ENCODE measurements at regions of chr17 and their contacts with region 1.

Region 1: DNA sequence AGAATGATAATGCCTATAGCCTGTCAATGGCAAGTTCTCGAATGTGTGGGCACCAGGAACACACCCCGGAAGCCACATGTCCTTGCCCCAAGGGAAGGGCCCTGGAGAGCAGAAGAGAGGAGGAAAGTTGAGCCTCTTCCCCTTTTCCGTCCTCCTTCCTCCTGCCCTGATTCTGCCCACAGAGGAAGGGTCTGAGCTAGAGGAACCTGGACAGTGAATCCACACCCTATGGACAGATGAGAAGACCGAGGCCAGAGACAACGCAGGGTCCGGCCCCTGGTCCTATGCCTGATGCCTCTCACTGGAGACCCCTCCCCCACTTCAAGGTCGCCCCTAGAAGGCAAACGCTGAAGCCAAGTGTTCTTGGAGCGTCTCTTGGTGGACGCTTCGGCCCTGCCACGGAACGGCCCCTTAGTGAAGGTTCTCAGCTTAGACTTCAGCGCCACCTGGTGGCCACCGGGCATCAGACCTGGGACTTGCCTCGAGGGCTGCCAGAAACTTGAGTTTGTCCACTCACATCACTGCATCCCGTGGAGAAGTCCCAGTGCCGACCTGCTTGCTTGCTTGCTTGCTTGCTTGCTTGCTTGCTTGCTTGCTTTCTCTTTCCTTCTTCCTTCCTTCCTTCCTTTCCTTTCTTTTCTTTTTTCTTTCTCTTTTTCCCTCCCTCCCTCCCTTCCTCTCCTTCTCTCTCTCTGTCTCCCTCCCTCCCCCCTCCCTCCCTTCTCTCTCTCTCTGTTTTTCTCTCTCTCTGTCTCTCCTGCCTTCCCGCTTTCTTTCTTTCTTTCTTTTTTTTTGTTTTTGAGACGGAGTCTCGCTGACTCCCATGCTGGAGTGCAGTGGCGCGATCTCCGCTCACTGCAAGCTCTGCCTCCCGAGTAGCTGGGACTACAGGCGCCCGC is 20.6 kb upstream of the SPNS3 start:
- DNase-seq: peak; percentile 93 to 95
- ATAC-seq: peak; percentile 95 to 99 (median 97)
- H3K4me3 ChIP-seq: peak overlapping the region in 1 of 10 donors; percentile 9
- H3K27ac ChIP-seq: no peak overlapping the region
- H3K4me1 ChIP-seq: peaks cover 0 to 7% (median 0%) of the 10 kb centered on the region in 9 donors
- H3K27me3 ChIP-seq: no peaks in the 10 kb centered on the region
- CTCF ChIP-seq: peak; percentile 84 to 92 (median 89)

Region 2: DNA sequence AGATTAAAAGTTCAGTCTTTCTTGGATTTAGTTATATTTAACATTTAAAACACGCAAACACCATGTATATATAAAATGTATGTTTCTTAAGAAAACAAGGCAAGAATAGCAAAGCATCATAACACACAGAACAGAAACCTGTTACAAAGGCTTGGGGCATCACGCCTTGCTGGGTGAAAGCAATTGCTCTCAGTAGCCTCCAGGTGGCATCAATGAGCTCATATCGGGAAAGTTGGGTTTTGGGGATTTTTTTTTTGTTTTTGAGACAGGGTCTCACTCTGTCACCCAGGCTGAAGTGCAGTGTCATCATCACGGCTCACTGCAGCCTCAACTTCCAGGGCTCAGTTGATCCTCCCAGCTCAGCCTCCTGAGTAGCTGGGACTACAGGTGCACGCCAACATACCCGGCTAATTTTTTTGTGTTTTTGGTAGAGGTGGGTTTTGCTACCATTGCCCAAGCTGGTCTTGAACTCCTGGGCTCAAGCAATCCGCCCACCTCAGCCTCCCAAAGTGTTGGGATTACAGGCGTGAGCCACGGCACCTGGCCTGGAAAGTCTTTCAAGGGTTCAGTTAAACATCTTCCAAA is 213.3 kb before region 1 on chr17:
- intact Hi-C with region 1: loop called in 6 of 10 experiments (anchors 5 kb)
- DNase-seq: no peak
- ATAC-seq: peak in 1 of 8 donors; percentile 48
- H3K4me3 ChIP-seq: no peak overlapping the region
- H3K27ac ChIP-seq: no peak overlapping the region
- H3K4me1 ChIP-seq: peaks cover 0 to 11% (median 10%) of the 10 kb centered on the region in 9 donors
- H3K27me3 ChIP-seq: no peaks in the 10 kb centered on the region
- CTCF ChIP-seq: peak; percentile 21 to 77 (median 73)

Region 3: DNA sequence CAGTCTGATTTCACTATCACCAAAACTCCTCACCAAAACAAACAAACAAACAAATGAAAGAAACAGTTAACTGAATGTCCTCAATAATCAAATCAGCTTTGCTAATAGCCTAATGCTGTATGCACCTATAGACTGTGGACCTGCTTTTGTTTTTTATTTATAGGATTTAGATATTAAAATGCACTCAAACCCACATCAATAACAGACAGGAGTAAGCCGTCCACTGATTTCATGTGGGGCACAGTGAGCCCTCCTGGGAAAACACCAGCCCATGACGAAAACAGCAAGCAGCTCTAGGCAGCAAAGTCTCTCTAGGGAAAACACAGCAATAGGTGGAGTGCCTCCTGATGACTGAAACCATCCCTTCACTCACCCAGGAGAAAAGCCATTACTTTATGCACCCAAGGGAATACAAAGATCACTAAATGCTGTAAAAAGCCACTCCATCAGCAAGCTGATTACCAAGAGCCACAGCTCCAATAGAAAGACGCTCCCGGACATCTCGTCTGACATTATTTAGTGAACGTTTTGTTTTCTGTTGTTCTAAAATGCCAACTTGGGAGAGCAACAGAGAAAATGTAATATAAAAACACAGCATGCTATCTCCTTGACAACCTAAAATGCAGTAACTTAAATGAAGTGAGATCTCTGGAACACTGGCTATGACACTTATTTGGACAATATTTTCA is 197.2 kb before region 1 on chr17:
- intact Hi-C with region 1: loop called (anchors 1 to 5 kb)
- DNase-seq: no peak
- ATAC-seq: peak in 2 of 8 donors; percentile 42 to 44
- H3K4me3 ChIP-seq: no peak overlapping the region
- H3K27ac ChIP-seq: peak overlapping the region in 7 of 10 donors; percentile 7 to 83 (median 60)
- H3K4me1 ChIP-seq: peaks cover 0 to 39% (median 26%) of the 10 kb centered on the region in 9 donors
- H3K27me3 ChIP-seq: no peaks in the 10 kb centered on the region
- CTCF ChIP-seq: no peak

Measured in heart right ventricle (tissue), 16 donors.